Mammary epithelial cell (primary cell): ENCODE measurements at regions of chr12 and their contacts with region 1.

Region 1: DNA sequence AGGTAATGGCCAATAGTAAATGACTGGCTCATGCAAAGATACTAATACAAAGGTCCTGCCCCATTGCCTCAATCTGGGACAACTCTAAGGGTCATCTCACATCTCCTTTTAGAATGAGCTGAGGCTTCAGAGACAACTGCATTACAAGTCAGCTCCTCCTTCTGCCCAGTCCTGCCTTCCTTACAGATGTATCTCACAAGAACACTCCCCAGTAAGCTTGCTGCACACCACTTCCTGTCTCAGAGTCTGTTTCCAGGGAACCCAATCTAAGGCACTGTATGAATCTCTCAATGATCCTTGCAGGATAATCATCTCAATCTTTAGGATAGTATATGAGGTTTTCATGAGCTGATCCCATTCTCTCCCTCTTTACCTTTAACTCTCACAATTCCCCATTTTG is 57.8 kb upstream of the ZDHHC17 start:
- DNase-seq: peak; percentile 40
- H3K4me3 ChIP-seq: no peak overlapping the region
- H3K27ac ChIP-seq: no peak overlapping the region
- H3K4me1 ChIP-seq: peaks cover 9% of the 10 kb centered on the region
- H3K27me3 ChIP-seq: no peaks in the 10 kb centered on the region
- CTCF ChIP-seq: no peak

Region 2: GRCh38 chr12:76645934-76646333 is 60.2 kb before region 1 on chr12:
- CTCF ChIA-PET with region 1: no interaction called
- dilution Hi-C with region 1: loop called (anchors 5 kb)
- in situ Hi-C with region 1: no loop called
- intact Hi-C with region 1: no loop called
- DNase-seq: no peak
- H3K4me3 ChIP-seq: no peak overlapping the region
- H3K27ac ChIP-seq: no peak overlapping the region
- H3K4me1 ChIP-seq: no peaks in the 10 kb centered on the region
- H3K27me3 ChIP-seq: no peaks in the 10 kb centered on the region
- CTCF ChIP-seq: no peak

Region 3: GRCh38 chr12:77102691-77103090 is 396.6 kb after region 1 on chr12:
- CTCF ChIA-PET with region 1: no interaction called
- dilution Hi-C with region 1: no loop called
- in situ Hi-C with region 1: no loop called
- intact Hi-C with region 1: no loop called
- DNase-seq: peak; percentile 59
- H3K4me3 ChIP-seq: no peak overlapping the region
- H3K27ac ChIP-seq: no peak overlapping the region
- H3K4me1 ChIP-seq: peaks cover 19% of the 10 kb centered on the region
- H3K27me3 ChIP-seq: no peaks in the 10 kb centered on the region
- CTCF ChIP-seq: no peak